Endothelial cell of umbilical vein (primary cell): ENCODE measurements at regions of chr5 and their contacts with region 1.

Region 1: DNA sequence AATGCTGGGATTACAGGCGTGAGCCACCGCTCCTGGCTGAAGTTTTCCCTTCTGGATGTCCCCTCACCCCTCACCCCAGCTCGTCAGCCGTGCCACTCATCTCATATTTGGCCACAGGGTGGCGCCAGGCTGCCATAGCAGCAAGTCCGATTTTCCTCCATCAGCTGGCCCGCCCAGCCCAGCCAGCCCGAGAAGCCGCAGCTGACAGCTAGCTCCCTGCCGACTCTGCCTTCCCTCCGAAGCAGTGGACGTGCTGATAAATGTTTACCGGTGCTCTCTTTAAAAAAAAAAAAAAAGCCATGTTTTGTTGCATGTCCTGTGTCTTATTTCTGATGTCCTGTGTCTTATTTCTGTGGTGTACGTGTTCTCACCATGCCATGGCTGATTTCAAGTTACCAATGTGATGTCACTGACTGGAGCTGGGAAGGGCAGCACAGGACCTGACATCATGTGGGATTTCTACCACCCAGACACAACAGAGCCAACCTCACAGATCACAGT is 58.3 kb downstream of the PFDN1 start:
- DNase-seq: peak; percentile 88
- H3K4me3 ChIP-seq: no peak overlapping the region
- H3K27ac ChIP-seq: peak overlapping the region; percentile 57
- H3K4me1 ChIP-seq: peaks cover 41% of the 10 kb centered on the region
- H3K27me3 ChIP-seq: no peaks in the 10 kb centered on the region
- CTCF ChIP-seq: peak; percentile 72 to 86
- POLR2A ChIP-seq: no peak

Region 2: GRCh38 chr5:139690064-139690802 is 554.3 kb before region 1 on chr5:
- CTCF ChIA-PET with region 1: no interaction called
- POLR2A ChIA-PET with region 1: no interaction called
- dilution Hi-C with region 1: no loop called
- intact Hi-C with region 1: no loop called
- DNase-seq: peak; percentile 53
- H3K4me3 ChIP-seq: no peak overlapping the region
- H3K27ac ChIP-seq: no peak overlapping the region
- H3K4me1 ChIP-seq: no peaks in the 10 kb centered on the region
- H3K27me3 ChIP-seq: no peaks in the 10 kb centered on the region
- CTCF ChIP-seq: peak; percentile 42 to 46
- POLR2A ChIP-seq: no peak

Region 3: GRCh38 chr5:140042643-140043500 is 201.7 kb before region 1 on chr5 and contains the start of gene NRG2:
- CTCF ChIA-PET with region 1: no interaction called
- POLR2A ChIA-PET with region 1: no interaction called
- dilution Hi-C with region 1: no loop called
- intact Hi-C with region 1: no loop called
- DNase-seq: peak; percentile 65
- H3K4me3 ChIP-seq: peak within 1 kb of the TSS; percentile 23 to 54 (median 44)
- H3K27ac ChIP-seq: no peak within 1 kb of the TSS
- H3K4me1 ChIP-seq: peaks cover 27% of the 10 kb centered on the region
- H3K27me3 ChIP-seq: peaks cover 3 to 12% of the 10 kb centered on the region in 2 experiments
- CTCF ChIP-seq: peak; percentile 32 to 72
- POLR2A ChIP-seq: no peak
- total RNA-seq, gene NRG2: 0.30 and 0.42 TPM in 2 replicates

Region 4: DNA sequence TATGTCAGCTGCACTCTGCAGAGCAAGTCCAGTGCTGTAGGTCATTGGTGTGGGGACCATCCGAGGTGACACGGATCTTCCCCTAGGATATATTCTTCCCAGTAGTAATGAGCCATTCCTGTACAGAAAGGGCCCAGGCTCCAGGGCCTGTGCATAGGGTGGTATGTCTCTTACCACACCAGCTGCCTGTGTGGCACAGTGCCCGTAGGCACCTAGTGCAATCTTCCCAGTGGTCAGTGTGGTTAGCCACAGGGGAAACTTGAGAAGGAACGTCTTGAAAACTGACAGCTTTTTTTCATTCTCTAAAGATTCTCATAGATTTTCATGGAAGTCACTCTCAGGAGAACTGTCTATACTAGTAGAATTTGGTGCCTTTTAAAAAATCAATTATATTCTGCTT is 29.7 kb before region 1 on chr5:
- CTCF ChIA-PET with region 1: interaction called, 10 read pairs
- POLR2A ChIA-PET with region 1: interaction called, 3 read pairs
- dilution Hi-C with region 1: no loop called
- intact Hi-C with region 1: no loop called
- DNase-seq: no peak
- H3K4me3 ChIP-seq: no peak overlapping the region
- H3K27ac ChIP-seq: no peak overlapping the region
- H3K4me1 ChIP-seq: no peaks in the 10 kb centered on the region
- H3K27me3 ChIP-seq: no peaks in the 10 kb centered on the region
- CTCF ChIP-seq: no peak
- POLR2A ChIP-seq: no peak

Region 5: DNA sequence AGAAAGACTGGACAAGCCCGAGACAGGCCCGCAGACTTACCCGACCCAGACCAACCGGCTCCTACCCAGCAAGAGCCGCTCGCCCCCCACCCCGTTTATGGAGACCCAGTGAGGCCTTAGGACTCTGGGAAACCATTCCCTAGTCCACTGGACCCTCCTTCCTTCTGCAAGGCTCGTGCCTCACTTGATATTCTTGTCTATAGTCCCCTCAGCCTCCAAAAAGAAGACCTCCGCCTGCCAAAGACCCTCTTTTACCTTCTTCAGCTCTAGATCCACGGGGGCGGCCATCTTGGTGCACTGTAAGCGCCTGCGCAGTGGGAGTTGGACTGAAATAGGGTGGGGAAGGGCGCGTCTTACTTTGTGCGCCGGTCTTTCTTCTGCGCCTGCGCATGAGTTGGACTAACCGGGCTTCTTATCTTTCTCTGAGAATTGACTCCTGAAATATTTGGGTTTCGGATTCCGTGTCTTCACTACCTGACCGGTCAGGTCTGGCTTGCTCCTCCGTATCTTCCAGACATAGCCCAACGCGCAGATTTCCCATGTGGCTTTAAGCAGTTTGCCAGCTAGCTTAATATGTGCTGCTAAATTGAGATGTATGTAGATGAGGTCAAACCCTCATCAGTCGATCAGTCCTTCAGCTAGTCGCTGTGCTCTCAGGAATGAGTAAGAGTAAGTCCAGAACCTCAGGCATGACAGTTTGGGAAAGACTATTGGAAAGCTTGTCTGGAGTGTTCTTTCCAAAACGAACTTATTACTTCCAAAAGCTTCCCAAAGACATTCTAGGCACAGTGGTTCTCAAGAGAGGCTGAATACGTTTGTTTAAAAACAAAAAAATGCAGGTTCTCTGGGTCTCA is 58.4 kb after region 1 on chr5 and contains the start of gene PFDN1:
- CTCF ChIA-PET with region 1: interaction called, 21 read pairs
- POLR2A ChIA-PET with region 1: no interaction called
- dilution Hi-C with region 1: no loop called
- intact Hi-C with region 1: loop called (anchors 1 kb)
- DNase-seq: peak; percentile 96
- H3K4me3 ChIP-seq: peak within 1 kb of the TSS; percentile 95 to 98 (median 95)
- H3K27ac ChIP-seq: peak within 1 kb of the TSS; percentile 85
- H3K4me1 ChIP-seq: peaks cover 23% of the 10 kb centered on the region
- H3K27me3 ChIP-seq: no peaks in the 10 kb centered on the region
- CTCF ChIP-seq: no peak
- POLR2A ChIP-seq: peak; percentile 81
- total RNA-seq, gene PFDN1: 107 and 108 TPM in 2 replicates

Region 6: DNA sequence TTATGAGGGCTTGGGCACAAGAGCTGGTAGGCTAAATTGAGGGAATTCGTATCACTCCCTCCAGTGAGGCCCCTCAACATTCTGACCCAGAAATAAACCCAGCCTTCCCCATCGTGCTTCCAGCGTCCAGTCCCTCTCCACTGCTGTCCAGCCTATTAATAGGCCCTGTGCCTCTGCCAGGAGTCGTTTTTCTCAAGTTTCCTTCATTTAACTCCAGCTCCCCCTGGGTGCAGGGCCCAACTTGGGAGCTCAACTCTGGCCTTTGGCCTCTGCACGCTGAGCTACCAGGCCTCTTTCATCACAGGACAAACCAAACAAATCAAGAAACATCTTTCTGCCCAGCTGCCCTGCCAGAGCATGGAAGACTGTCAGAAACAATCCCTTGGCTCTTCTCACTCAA is 91.8 kb after region 1 on chr5:
- CTCF ChIA-PET with region 1: interaction called, 1,214 read pairs
- POLR2A ChIA-PET with region 1: no interaction called
- dilution Hi-C with region 1: no loop called
- intact Hi-C with region 1: no loop called
- DNase-seq: no peak
- H3K4me3 ChIP-seq: no peak overlapping the region
- H3K27ac ChIP-seq: peak overlapping the region; percentile 21
- H3K4me1 ChIP-seq: peaks cover 13% of the 10 kb centered on the region
- H3K27me3 ChIP-seq: no peaks in the 10 kb centered on the region
- CTCF ChIP-seq: no peak
- POLR2A ChIP-seq: no peak

Region 7: GRCh38 chr5:140362860-140363630 is 118.5 kb after region 1 on chr5:
- CTCF ChIA-PET with region 1: interaction called, 118 read pairs
- POLR2A ChIA-PET with region 1: interaction called, 5 read pairs
- dilution Hi-C with region 1: no loop called
- intact Hi-C with region 1: no loop called
- DNase-seq: peak; percentile 61
- H3K4me3 ChIP-seq: peak overlapping the region in 2 of 3 experiments; percentile 20 to 24
- H3K27ac ChIP-seq: no peak overlapping the region
- H3K4me1 ChIP-seq: peaks cover 3% of the 10 kb centered on the region
- H3K27me3 ChIP-seq: no peaks in the 10 kb centered on the region
- CTCF ChIP-seq: peak; percentile 97 to 98
- POLR2A ChIP-seq: no peak

Region 8: DNA sequence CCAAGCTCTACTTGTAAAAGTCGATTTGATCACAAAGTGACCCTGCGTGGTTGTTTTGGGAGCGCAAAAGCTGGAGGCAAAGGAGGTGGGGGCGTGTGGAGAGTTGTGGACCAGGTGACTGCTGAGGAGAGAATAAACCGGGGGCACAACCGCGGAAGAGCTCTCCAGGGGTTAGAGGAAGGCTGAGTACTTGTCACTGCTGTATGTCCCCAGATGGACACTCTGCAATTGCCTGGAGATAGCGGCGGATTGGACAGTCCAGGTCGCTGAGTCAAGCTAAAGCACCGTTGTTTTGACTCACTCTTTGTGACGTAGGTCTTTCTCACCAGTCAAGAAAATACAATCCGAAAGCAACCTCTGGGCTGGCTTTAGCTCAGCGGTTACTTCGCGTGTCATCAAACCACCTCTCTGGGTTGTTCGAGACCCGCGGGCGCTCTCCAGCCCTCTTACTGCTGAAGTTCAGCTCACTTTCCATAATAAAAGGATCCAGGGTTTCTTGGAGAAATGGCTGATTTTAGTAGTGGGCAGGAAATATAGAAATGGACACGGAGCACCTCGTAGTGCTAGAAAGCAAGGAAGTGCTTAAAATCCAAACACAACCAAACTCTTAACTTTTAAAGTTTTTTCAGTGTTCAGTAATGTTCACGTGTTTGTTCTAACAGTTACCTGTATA is 481.4 kb after region 1 on chr5:
- CTCF ChIA-PET with region 1: interaction called, 3 read pairs
- POLR2A ChIA-PET with region 1: no interaction called
- dilution Hi-C with region 1: no loop called
- intact Hi-C with region 1: loop called (anchors 2 kb)
- DNase-seq: peak; percentile 85
- H3K4me3 ChIP-seq: peak overlapping the region; percentile 28 to 66 (median 54)
- H3K27ac ChIP-seq: no peak overlapping the region
- H3K4me1 ChIP-seq: peaks cover 4% of the 10 kb centered on the region
- H3K27me3 ChIP-seq: no peaks in the 10 kb centered on the region
- CTCF ChIP-seq: no peak
- POLR2A ChIP-seq: no peak